GM12878 (cell line): ENCODE measurements at regions of chr18 and their contacts with region 1.

Region 1: DNA sequence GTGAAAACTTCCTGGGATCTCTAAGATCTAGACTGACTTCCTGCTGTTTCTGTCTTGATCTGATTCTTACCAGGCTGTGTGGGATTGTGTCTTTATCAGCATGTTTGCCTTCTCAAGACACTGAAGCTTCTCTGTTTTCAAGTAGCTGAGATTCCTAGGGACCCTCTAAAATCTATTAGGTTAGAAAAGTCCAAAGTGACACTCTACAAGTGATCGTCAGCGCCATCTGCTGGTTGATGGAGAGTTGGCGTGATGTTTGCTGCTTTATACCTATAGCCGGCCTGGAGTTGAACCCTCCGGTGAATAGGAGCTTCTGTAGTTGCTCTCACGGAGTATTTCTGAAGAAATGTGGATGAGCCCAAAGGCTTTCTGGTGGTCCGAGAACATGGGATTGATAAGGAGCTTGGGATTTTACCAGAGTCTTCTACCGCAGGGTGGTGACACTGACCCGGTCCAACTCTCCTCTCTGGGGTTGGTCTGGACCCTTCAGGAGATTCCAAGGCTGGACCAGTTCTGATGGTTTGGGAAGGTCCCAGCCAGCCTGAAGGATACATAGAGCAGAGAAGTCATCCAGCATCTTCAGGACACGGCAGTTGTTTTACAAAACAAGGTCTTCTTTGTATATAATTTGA is 96.0 kb upstream of the TTC39C start:
- DNase-seq: no peak
- ATAC-seq: peak; percentile 95
- H3K4me3 ChIP-seq: no peak overlapping the region
- H3K27ac ChIP-seq: no peak overlapping the region
- H3K4me1 ChIP-seq: no peaks in the 10 kb centered on the region
- H3K27me3 ChIP-seq: no peaks in the 10 kb centered on the region; a peak in 1 of 4 replicates
- CTCF ChIP-seq: peak; percentile 77 to 87 (median 85)
- EP300 ChIP-seq: no peak
- POLR2A ChIP-seq: no peak
- RAD21 ChIP-seq: peak; percentile 87

Region 2: GRCh38 chr18:23719634-23720201 is 198.8 kb before region 1 on chr18:
- CTCF ChIA-PET with region 1: no interaction called
- POLR2A ChIA-PET with region 1: no interaction called
- RAD21 ChIA-PET with region 1: no interaction called
- SMC1A ChIA-PET with region 1: no interaction called
- in situ Hi-C with region 1: no loop called
- intact Hi-C with region 1: loop called (anchors 10 kb)
- DNase-seq: no peak
- ATAC-seq: no peak
- H3K4me3 ChIP-seq: no peak overlapping the region
- H3K27ac ChIP-seq: no peak overlapping the region
- H3K4me1 ChIP-seq: no peaks in the 10 kb centered on the region
- H3K27me3 ChIP-seq: no peaks in the 10 kb centered on the region; a peak in 1 of 4 replicates
- CTCF ChIP-seq: no peak
- EP300 ChIP-seq: no peak
- POLR2A ChIP-seq: no peak
- RAD21 ChIP-seq: no peak

Region 3: DNA sequence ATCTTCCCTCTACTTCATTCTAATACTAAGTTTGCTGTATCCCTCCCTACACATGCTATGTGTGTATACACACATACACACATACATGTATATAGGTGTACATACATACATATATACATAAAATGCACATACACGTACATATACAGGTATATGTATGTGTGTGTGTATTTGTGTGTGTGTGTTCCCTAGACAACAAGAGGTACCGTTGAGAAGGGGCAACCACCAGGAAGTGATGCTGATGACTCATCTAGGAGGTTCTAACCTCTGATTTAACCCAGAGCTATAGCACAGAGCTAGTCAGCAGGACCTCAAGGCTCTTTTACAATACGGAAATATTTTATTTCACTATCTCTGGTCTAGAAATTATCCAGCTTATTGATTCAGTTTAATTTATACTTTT is 90.1 kb before region 1 on chr18:
- CTCF ChIA-PET with region 1: interaction called, 19 read pairs
- POLR2A ChIA-PET with region 1: no interaction called
- RAD21 ChIA-PET with region 1: interaction called, 10 read pairs
- SMC1A ChIA-PET with region 1: interaction called, 5 read pairs
- in situ Hi-C with region 1: no loop called
- intact Hi-C with region 1: loop called (anchors 5 kb)
- DNase-seq: no peak
- ATAC-seq: peak; percentile 96
- H3K4me3 ChIP-seq: no peak overlapping the region
- H3K27ac ChIP-seq: no peak overlapping the region
- H3K4me1 ChIP-seq: no peaks in the 10 kb centered on the region
- H3K27me3 ChIP-seq: no peaks in the 10 kb centered on the region
- CTCF ChIP-seq: no peak
- EP300 ChIP-seq: no peak
- POLR2A ChIP-seq: no peak
- RAD21 ChIP-seq: no peak

Region 4: GRCh38 chr18:23906658-23907057 is 11.9 kb before region 1 on chr18:
- CTCF ChIA-PET with region 1: interaction called, 11 read pairs
- POLR2A ChIA-PET with region 1: no interaction called
- RAD21 ChIA-PET with region 1: interaction called, 5 read pairs
- SMC1A ChIA-PET with region 1: interaction called, 6 read pairs
- in situ Hi-C with region 1: no loop called
- intact Hi-C with region 1: no loop called
- DNase-seq: no peak
- ATAC-seq: no peak
- H3K4me3 ChIP-seq: no peak overlapping the region
- H3K27ac ChIP-seq: no peak overlapping the region
- H3K4me1 ChIP-seq: no peaks in the 10 kb centered on the region
- H3K27me3 ChIP-seq: no peaks in the 10 kb centered on the region
- CTCF ChIP-seq: no peak
- EP300 ChIP-seq: no peak
- POLR2A ChIP-seq: no peak
- RAD21 ChIP-seq: no peak

Region 5: DNA sequence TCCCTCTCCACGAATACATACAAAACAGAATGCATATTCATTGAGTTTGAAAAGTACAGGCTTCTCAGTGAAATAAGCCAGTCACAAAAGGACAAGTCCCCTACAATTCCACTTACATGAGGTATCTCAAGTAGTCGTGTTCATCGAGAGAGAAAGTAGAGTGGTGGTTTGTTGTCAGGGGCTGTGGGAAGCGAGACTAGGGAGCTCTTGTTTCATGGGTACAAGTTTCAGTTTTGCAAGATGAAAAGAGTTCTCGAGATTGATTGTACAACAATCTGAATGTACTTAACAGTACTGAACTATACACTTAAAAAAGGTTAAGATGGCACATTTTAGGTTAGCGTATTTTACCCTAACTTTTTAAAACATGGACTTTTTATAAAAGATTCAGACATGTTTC is 24.6 kb after region 1 on chr18:
- CTCF ChIA-PET with region 1: interaction called, 15 read pairs
- POLR2A ChIA-PET with region 1: no interaction called
- RAD21 ChIA-PET with region 1: interaction called, 3 read pairs
- SMC1A ChIA-PET with region 1: interaction called, 6 read pairs
- in situ Hi-C with region 1: no loop called
- intact Hi-C with region 1: no loop called
- DNase-seq: peak; percentile 68
- ATAC-seq: peak; percentile 84
- H3K4me3 ChIP-seq: no peak overlapping the region
- H3K27ac ChIP-seq: peak overlapping the region; percentile 65
- H3K4me1 ChIP-seq: peaks cover 44% of the 10 kb centered on the region
- H3K27me3 ChIP-seq: no peaks in the 10 kb centered on the region
- CTCF ChIP-seq: no peak
- EP300 ChIP-seq: peak in 1 of 2 experiments; percentile 27; a peak in 2 of 4 replicates
- POLR2A ChIP-seq: no peak
- RAD21 ChIP-seq: no peak